Right cardiac atrium (tissue), 5 donors: ENCODE measurements at regions of chr2 and their contacts with region 1.

Region 1: GRCh38 chr2:17538844-17539554 is 1.5 kb upstream of the VSNL1 start:
- DNase-seq: peak; percentile 65 to 88 (median 80)
- ATAC-seq: peak; percentile 90 to 91
- H3K4me3 ChIP-seq: peak overlapping the region; percentile 47
- H3K27ac ChIP-seq: peak overlapping the region; percentile 70
- H3K4me1 ChIP-seq: no peaks in the 10 kb centered on the region
- H3K27me3 ChIP-seq: no peaks in the 10 kb centered on the region

Region 2: GRCh38 chr2:16756831-16757644 is 782.0 kb before region 1 on chr2:
- intact Hi-C with region 1: no loop called
- DNase-seq: peak; percentile 80 to 90 (median 87)
- ATAC-seq: peak; percentile 90 to 94
- H3K4me3 ChIP-seq: no peak overlapping the region
- H3K27ac ChIP-seq: no peak overlapping the region
- H3K4me1 ChIP-seq: no peaks in the 10 kb centered on the region
- H3K27me3 ChIP-seq: no peaks in the 10 kb centered on the region

Region 3: DNA sequence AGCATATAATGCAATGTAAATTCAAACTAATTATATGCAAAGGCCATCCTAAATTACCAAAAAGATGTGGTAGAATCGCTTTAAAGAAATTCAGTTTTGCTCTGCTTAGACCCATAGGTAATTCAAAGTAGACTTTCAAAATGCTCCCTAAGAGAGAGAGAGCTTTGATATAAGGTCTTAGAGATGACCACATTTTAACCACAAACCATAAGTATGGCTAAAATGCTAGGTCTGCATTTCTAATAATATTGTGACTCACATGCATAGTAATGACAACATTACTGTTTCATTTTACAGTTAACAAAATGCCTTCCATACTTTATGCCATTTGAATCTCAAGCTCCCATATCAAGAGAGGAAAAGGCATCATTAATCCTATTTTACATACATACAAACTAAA is 165.3 kb before region 1 on chr2:
- intact Hi-C with region 1: no loop called
- DNase-seq: no peak
- ATAC-seq: no peak
- H3K4me3 ChIP-seq: no peak overlapping the region
- H3K27ac ChIP-seq: no peak overlapping the region
- H3K4me1 ChIP-seq: no peaks in the 10 kb centered on the region
- H3K27me3 ChIP-seq: no peaks in the 10 kb centered on the region

Region 4: DNA sequence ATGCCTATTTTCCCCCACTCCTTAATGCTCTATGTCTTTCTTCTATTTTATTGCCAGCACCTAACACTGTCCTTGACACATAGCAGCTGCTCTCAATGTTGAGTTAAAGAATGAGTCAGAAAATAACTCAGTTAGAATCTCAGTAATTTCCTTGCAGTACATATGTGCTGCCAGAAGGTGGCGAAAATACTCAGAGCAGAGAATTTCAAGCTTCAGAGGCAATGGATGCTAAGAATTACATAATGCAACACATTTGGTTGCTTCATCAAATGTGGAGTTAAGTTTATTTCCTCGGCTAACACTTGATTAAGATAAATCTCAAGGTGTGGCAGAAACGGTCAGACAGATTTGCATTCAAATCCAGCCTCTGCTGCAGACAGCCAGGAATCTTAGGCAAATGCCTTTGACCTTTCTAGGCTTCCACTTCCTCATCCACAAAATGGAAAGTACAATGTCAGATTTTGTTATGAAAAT is 107.1 kb after region 1 on chr2:
- intact Hi-C with region 1: loop called in 3 of 4 experiments (anchors 5 to 10 kb)
- DNase-seq: no peak
- ATAC-seq: peak; percentile 53 to 71
- H3K4me3 ChIP-seq: no peak overlapping the region
- H3K27ac ChIP-seq: no peak overlapping the region
- H3K4me1 ChIP-seq: peaks cover 3% of the 10 kb centered on the region
- H3K27me3 ChIP-seq: no peaks in the 10 kb centered on the region

Region 5: DNA sequence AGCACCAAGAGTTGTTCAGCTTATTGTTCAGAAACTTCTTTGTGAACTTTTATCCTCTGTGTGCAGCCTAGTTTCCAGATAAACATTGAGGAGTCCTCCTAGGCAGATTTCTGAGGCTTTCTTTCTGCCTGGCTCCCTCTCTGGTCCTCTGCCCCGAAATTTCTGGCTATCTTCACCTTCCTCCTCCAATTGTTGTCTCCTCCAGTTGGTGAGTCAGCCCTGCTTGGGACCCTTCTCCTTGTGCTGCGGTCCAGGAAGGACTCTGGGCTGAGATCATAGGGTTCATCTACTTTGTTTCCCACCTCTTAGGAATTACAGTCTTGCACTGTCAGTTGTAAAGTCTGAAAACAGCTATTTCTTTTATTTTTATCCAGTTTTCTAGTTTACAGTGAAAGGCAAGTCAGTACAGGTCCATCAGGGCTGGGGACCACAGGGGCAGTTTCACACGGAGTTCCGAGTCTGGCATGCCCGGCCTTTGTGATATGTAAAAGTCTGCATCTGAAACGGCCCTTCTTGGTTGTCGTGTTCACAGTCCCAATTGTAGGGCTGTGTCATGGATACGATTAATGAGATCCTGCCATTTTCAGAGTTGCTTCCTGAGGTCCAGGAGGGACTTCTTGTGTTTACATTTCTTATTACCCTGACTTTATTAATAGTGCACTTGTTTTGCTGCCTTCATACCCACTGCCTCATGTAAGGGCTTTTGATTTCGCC is 113.8 kb after region 1 on chr2:
- intact Hi-C with region 1: loop called in 3 of 4 experiments (anchors 5 to 10 kb)
- DNase-seq: no peak
- ATAC-seq: no peak
- H3K4me3 ChIP-seq: no peak overlapping the region
- H3K27ac ChIP-seq: no peak overlapping the region
- H3K4me1 ChIP-seq: no peaks in the 10 kb centered on the region
- H3K27me3 ChIP-seq: no peaks in the 10 kb centered on the region

Region 6: DNA sequence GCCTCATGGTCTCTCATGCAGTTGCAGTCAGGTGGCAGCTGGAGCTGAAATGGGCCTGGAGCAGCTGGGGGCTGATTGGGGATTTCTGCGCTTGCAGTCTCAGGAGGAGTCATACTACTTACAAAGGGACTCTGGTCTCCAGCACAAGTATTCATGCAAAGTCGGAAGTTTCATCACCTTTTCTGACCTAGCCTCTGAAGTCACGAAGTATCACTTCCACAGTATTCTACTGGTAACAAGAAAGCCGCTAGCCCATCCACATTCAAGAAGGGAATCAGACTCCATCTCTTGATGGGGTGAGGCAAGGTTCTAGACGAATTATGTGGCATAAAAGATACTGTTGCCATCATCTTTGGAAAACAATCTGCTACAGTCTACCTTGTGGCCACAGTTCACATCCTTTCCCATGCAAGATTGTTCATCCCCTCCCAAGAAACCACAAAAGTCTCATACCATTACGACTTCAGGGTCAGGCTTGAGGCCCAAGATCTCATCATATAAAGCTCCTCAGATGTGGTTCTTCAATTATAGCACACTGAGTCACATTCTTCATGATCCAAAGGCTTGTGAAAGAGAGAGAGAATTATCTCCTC is 119.3 kb after region 1 on chr2:
- intact Hi-C with region 1: loop called in 2 of 4 experiments (anchors 5 to 10 kb)
- DNase-seq: no peak
- ATAC-seq: no peak
- H3K4me3 ChIP-seq: no peak overlapping the region
- H3K27ac ChIP-seq: no peak overlapping the region
- H3K4me1 ChIP-seq: no peaks in the 10 kb centered on the region
- H3K27me3 ChIP-seq: no peaks in the 10 kb centered on the region